ENCODE measurements at regions of chr6 and their contacts with region 1.

Region 1: GRCh38 chr6:144931172-144932035 is 646.3 kb downstream of the UTRN start:
- DNase-seq: peak; percentile 39
- H3K4me3 Mint-ChIP-seq: no peak overlapping the region
- H3K27ac Mint-ChIP-seq: no peak overlapping the region
- H3K4me1 Mint-ChIP-seq: no peaks in the 10 kb centered on the region
- H3K27me3 Mint-ChIP-seq: no peaks in the 10 kb centered on the region
- CTCF ChIP-seq: peak; percentile 35

Region 2: DNA sequence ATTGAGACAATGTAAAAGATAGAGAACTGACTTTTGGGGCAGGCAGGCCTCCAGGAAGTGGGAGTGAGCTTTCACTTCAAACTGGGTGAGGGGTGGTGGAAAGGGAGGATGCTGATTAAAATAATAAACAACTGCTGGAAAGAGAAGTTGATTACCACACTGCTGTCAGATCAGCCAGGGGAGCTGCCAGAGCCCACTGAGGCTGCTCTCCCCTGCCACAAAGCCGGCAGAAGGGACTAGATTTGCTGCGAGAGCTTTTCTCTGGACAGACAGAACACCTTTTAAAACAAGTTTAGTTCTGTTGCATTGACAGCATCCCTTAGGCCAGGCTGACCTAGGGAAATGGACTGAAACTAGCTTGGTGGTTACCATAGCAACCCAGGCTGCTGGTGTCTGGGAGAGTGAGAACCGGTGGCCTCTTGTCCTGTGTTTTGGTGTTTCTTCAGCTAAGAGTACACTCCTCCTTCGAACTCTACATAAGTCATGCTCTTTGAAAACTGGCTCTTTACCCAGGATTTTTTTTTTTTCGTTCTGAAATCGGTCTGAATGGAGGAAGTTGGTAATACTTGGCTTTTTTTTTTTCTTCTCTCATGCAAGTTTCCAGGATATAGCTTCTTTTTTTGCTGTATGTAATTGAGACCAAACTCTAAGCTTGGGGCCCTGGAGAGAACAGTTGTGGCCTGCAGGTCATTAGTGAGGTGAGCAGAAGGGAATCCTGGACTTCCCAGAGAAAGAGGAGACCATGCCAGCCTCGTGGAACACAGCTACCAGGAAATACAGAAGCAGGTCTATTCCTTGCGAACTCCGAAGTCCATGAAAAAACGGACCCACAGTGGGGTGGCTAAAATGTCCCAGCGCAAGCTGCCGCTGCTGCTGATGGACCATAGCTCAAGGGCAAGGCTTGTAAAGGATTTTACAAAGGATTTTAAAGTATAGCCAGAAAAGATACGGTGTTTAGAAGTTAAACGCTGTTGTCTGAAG is 271.9 kb before region 1 on chr6:
- CTCF ChIA-PET with region 1: no interaction called
- intact Hi-C with region 1: loop called (anchors 10 kb)
- DNase-seq: peak; percentile 25
- H3K4me3 Mint-ChIP-seq: peak overlapping the region; percentile 17
- H3K27ac Mint-ChIP-seq: peak overlapping the region; percentile 42
- H3K4me1 Mint-ChIP-seq: peaks cover 60% of the 10 kb centered on the region
- H3K27me3 Mint-ChIP-seq: no peaks in the 10 kb centered on the region
- CTCF ChIP-seq: no peak

Region 3: DNA sequence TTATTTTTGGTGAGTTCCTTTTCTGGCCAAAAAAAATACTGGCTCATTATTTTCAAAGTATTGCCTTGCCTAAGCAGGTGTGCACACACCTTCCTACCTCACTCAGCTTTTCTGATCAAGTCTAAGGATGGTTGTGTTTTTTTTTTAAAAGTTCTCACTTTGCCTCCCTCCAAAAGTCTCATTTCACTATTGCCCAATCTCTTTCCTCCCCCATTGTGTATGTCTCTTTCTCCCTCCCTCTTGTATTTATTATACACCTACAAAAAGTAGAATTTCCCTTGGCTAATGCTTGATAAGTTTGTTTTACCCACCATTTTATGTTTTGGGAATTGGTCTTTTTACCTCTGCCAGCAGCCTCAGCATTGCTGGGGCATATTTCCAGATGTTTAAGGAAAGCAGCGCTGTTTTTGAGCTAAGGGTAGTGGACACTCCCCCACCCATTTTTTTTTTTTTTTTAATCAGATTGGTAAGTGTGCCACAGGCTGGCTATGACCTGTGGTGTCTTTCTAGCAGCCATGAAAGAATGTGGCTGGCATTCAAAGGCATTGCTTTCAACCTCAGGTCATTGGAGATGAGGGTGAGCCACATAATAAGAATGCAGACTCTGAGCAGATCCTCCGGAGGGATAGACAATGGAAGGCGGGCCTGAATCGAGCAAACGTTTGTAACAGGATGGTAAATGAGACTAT is 22.3 kb after region 1 on chr6:
- CTCF ChIA-PET with region 1: no interaction called
- intact Hi-C with region 1: no loop called
- DNase-seq: peak; percentile 4
- H3K4me3 Mint-ChIP-seq: no peak overlapping the region
- H3K27ac Mint-ChIP-seq: no peak overlapping the region
- H3K4me1 Mint-ChIP-seq: peaks cover 11% of the 10 kb centered on the region
- H3K27me3 Mint-ChIP-seq: no peaks in the 10 kb centered on the region
- CTCF ChIP-seq: no peak